ENCODE measurements at regions of chr17 and their contacts with region 1.

Region 1: GRCh38 chr17:7004398-7005253 is 7.8 kb upstream of the RNASEK start:
- DNase-seq: peak; percentile 42
- H3K4me3 Mint-ChIP-seq: no peak overlapping the region
- H3K27ac Mint-ChIP-seq: peak overlapping the region; percentile 16
- H3K4me1 Mint-ChIP-seq: peaks cover 21% of the 10 kb centered on the region
- H3K27me3 Mint-ChIP-seq: no peaks in the 10 kb centered on the region

Region 2: GRCh38 chr17:6843241-6843880 is 161.3 kb before region 1 on chr17:
- CTCF ChIA-PET with region 1: interaction called, 25 read pairs
- DNase-seq: no peak
- H3K4me3 Mint-ChIP-seq: no peak overlapping the region
- H3K27ac Mint-ChIP-seq: no peak overlapping the region
- H3K4me1 Mint-ChIP-seq: peaks cover 5% of the 10 kb centered on the region
- H3K27me3 Mint-ChIP-seq: peaks cover 46% of the 10 kb centered on the region

Region 3: DNA sequence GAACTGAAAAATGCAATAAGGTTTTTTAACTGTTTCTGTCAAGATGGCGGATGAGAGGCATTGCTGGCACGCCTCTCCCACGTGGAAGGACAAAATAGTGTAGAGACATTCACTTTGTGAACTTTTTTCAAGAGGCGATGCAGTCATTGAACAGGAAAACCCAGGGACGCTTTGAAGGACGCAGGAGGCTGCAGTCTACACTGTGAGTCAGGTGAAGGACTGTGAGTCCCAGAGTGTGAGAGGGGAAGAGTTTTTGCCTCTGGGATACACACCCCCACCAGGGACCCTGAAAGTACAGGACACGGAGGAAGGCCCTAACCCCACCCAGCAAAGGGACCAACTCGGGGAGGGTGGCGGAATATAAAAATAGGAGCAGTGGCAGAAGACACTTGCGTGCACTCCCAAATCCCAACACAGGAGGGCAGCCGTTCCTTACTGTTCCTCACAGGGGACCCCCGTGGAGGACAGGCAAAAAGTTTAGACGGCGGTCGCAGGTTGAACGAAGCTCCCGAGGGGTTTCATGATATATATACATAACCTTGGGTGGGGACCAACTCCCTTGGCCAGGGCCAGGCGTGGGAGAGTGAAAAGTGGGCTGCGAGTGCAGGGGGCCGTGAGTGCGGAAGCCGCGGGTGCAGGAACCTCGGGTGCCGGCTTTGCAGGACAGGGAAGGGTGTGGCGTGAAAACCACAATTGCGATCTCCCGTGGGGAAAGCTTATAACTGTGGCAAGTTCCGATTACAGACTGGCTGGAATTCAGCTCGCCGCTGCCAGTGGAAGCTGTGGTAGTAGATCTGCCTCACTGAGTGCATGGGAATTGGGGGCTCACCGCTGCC is 90.8 kb before region 1 on chr17:
- CTCF ChIA-PET with region 1: interaction called, 214 read pairs
- DNase-seq: peak; percentile 86
- H3K4me3 Mint-ChIP-seq: peak overlapping the region; percentile 53
- H3K27ac Mint-ChIP-seq: no peak overlapping the region
- H3K4me1 Mint-ChIP-seq: peaks cover 28% of the 10 kb centered on the region
- H3K27me3 Mint-ChIP-seq: peaks cover 40% of the 10 kb centered on the region

Region 4: GRCh38 chr17:6927290-6928126 is 77.1 kb before region 1 on chr17:
- CTCF ChIA-PET with region 1: interaction called, 11 read pairs
- DNase-seq: no peak
- H3K4me3 Mint-ChIP-seq: no peak overlapping the region
- H3K27ac Mint-ChIP-seq: no peak overlapping the region
- H3K4me1 Mint-ChIP-seq: peaks cover 15% of the 10 kb centered on the region
- H3K27me3 Mint-ChIP-seq: peaks cover 20% of the 10 kb centered on the region

Region 5: GRCh38 chr17:7021993-7022778 is 17.6 kb after region 1 on chr17:
- CTCF ChIA-PET with region 1: interaction called, 28 read pairs
- DNase-seq: peak; percentile 83
- H3K4me3 Mint-ChIP-seq: peak overlapping the region; percentile 26
- H3K27ac Mint-ChIP-seq: no peak overlapping the region
- H3K4me1 Mint-ChIP-seq: peaks cover 69% of the 10 kb centered on the region
- H3K27me3 Mint-ChIP-seq: peaks cover 50% of the 10 kb centered on the region

Measured in activated naive CD4-positive, alpha-beta T cell treated with anti-CD3 and anti-CD28 coated beads, Interleukin-2, amount 10 ng/mL, durations not matched to agents 7 days and 5 days (primary cell).